K562 (cell line): ENCODE measurements at regions of chrX and their contacts with region 1.

Region 1: GRCh38 chrX:104270920-104271512 is 16.3 kb upstream of the ESX1 start:
- DNase-seq: peak; percentile 9 to 33 (median 12)
- ATAC-seq: peak; percentile 49; the same call in 1 of the 3 replicates
- H3K4me3 ChIP-seq: no peak overlapping the region
- H3K27ac ChIP-seq: no peak overlapping the region
- H3K4me1 ChIP-seq: no peaks in the 10 kb centered on the region
- H3K27me3 ChIP-seq: no peaks in the 10 kb centered on the region
- CTCF ChIP-seq: peak; percentile 59 to 68 (median 66)
- EP300 ChIP-seq: no peak
- POLR2A ChIP-seq: no peak
- RAD21 ChIP-seq: peak in 1 of 2 experiments; percentile 61; a peak in 3 of 4 replicates

Region 2: GRCh38 chrX:103845165-103845653 is 425.8 kb before region 1 on chrX:
- CTCF ChIA-PET with region 1: no interaction called
- POLR2A ChIA-PET with region 1: no interaction called
- in situ Hi-C with region 1: no loop called
- intact Hi-C with region 1: loop called (anchors 10 kb)
- DNase-seq: peak; percentile 23 to 54 (median 36)
- ATAC-seq: peak; percentile 87
- H3K4me3 ChIP-seq: no peak overlapping the region
- H3K27ac ChIP-seq: no peak overlapping the region
- H3K4me1 ChIP-seq: no peaks in the 10 kb centered on the region
- H3K27me3 ChIP-seq: no peaks in the 10 kb centered on the region
- CTCF ChIP-seq: peak; percentile 60 to 63 (median 60)
- EP300 ChIP-seq: no peak
- POLR2A ChIP-seq: no peak
- RAD21 ChIP-seq: peak; percentile 41 to 60

Region 3: DNA sequence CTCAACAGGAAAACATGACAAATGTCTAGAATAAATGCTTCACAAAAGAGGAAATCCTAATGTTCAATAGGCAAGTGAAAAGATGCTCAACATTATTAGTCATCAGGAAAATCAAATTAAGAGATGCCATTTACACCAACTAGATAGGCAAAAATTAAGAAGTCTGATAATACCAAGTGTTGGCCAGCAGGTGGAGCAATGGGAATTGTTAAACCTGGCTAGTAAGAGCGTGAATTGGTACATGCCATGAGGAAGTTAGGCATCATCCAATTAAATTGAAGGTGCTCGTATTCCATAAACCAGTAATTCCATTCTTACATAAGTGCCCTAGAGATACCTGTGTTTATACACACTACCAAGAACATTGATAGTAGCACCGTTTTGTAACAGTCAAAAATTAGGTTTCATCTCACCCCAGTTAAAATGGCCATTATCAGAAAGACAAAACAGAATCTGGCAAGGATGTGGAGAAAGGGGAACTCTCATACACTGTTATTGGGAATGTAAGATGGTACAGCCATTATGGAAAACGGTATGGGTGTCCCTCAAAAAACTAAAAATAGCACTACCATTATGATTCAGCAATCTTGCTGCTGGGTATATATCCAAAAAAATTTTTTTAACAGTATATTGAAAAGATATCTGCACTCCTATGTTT is 172.7 kb before region 1 on chrX:
- CTCF ChIA-PET with region 1: interaction called, 9 read pairs
- POLR2A ChIA-PET with region 1: no interaction called
- in situ Hi-C with region 1: no loop called
- intact Hi-C with region 1: loop called (anchors 1 kb)
- DNase-seq: peak; percentile 31 to 65 (median 35)
- ATAC-seq: peak; percentile 64; the same call in 2 of the 3 replicates
- H3K4me3 ChIP-seq: no peak overlapping the region
- H3K27ac ChIP-seq: no peak overlapping the region
- H3K4me1 ChIP-seq: no peaks in the 10 kb centered on the region
- H3K27me3 ChIP-seq: no peaks in the 10 kb centered on the region
- CTCF ChIP-seq: peak; percentile 46 to 69 (median 50); a peak in 5 of 6 replicates
- EP300 ChIP-seq: no peak
- POLR2A ChIP-seq: no peak
- RAD21 ChIP-seq: peak; percentile 49 to 70

Region 4: GRCh38 chrX:104189837-104190236 is 81.2 kb before region 1 on chrX:
- CTCF ChIA-PET with region 1: no interaction called
- POLR2A ChIA-PET with region 1: no interaction called
- in situ Hi-C with region 1: no loop called
- intact Hi-C with region 1: loop called (anchors 5 kb)
- DNase-seq: no peak
- ATAC-seq: no peak
- H3K4me3 ChIP-seq: no peak overlapping the region
- H3K27ac ChIP-seq: no peak overlapping the region
- H3K4me1 ChIP-seq: no peaks in the 10 kb centered on the region
- H3K27me3 ChIP-seq: no peaks in the 10 kb centered on the region
- CTCF ChIP-seq: no peak
- EP300 ChIP-seq: no peak
- POLR2A ChIP-seq: no peak
- RAD21 ChIP-seq: no peak

Region 5: DNA sequence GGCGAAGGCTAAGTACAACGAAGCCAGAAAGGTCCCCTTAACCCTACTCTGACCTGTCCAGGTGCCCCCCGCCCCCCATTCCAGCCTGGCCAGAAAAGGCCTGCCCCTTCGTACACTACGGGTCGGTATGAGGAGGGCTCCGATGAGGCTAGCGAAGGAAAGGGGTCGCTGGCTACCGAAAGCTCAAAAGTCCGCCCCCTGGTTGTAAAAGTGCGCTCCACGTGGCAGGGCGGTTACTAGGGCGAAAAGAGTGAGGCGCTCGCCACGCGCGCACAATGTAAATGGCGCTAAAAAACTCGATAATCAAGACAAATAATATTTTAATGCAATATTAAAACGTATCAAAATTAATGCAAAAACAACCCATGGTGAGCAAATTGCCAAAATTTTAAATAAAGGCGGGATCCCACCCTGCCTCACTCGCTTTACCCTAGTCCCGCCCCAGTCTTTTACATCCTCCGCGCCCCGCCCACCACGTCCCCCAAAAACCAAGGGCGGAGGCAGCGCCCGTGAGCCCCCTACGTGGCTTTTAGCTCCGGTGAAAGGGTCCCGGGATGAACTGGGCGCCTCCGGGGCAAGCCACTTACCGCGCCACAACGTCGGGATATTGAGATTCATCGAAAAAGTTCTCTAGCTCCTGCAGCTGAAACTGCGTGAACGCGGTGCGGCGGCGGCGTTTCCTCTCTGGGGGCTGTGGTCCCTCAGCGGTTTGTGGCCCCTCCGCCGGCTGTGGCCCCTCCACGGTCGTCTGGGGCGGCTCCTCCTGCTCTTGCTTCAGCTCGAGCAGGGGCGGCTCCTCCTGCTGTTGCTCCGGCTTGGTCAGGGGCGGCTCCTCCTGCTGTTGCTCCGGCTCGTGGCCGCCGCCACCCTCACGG is 17.2 kb before region 1 on chrX:
- CTCF ChIA-PET with region 1: no interaction called
- POLR2A ChIA-PET with region 1: no interaction called
- in situ Hi-C with region 1: no loop called
- intact Hi-C with region 1: no loop called
- DNase-seq: no peak
- ATAC-seq: no peak
- H3K4me3 ChIP-seq: no peak overlapping the region
- H3K27ac ChIP-seq: no peak overlapping the region
- H3K4me1 ChIP-seq: no peaks in the 10 kb centered on the region
- H3K27me3 ChIP-seq: peaks cover 0 to 11% of the 10 kb centered on the region in 2 experiments; a peak in 3 of 5 replicates
- CTCF ChIP-seq: no peak
- EP300 ChIP-seq: no peak
- POLR2A ChIP-seq: no peak
- RAD21 ChIP-seq: no peak